ENCODE measurements at regions of chr6 and their contacts with region 1.

Region 1: GRCh38 chr6:31493875-31494694 is 3.9 kb upstream of the MICB start:
- DNase-seq: peak; percentile 85
- H3K4me3 Mint-ChIP-seq: peak overlapping the region; percentile 81
- H3K27ac Mint-ChIP-seq: peak overlapping the region; percentile 78
- H3K4me1 Mint-ChIP-seq: peaks cover 60% of the 10 kb centered on the region
- H3K27me3 Mint-ChIP-seq: no peaks in the 10 kb centered on the region

Region 2: GRCh38 chr6:31462964-31463870 is 30.9 kb before region 1 on chr6:
- CTCF ChIA-PET with region 1: no interaction called
- POLR2A ChIA-PET with region 1: interaction called, 10 read pairs
- DNase-seq: peak; percentile 91
- H3K4me3 Mint-ChIP-seq: peak overlapping the region; percentile 99
- H3K27ac Mint-ChIP-seq: peak overlapping the region; percentile 72
- H3K4me1 Mint-ChIP-seq: peaks cover 56% of the 10 kb centered on the region
- H3K27me3 Mint-ChIP-seq: peaks cover 3% of the 10 kb centered on the region

Region 3: DNA sequence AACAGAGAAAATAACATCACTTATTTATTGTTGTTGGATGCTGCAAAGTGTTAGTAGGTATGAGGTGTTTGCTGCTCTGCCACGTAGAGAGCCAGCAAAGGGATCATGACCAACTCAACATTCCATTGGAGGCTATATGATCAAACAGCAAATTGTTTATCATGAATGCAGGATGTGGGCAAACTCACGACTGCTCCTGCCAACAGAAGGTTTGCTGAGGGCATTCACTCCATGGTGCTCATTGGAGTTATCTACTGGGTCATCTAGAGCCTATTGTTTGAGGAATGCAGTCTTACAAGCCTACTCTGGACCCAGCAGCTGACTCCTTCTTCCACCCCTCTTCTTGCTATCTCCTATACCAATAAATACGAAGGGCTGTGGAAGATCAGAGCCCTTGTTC is 15.9 kb after region 1 on chr6:
- CTCF ChIA-PET with region 1: no interaction called
- POLR2A ChIA-PET with region 1: no interaction called
- DNase-seq: no peak
- H3K4me3 Mint-ChIP-seq: no peak overlapping the region
- H3K27ac Mint-ChIP-seq: no peak overlapping the region
- H3K4me1 Mint-ChIP-seq: peaks cover 3% of the 10 kb centered on the region
- H3K27me3 Mint-ChIP-seq: no peaks in the 10 kb centered on the region

Region 4: DNA sequence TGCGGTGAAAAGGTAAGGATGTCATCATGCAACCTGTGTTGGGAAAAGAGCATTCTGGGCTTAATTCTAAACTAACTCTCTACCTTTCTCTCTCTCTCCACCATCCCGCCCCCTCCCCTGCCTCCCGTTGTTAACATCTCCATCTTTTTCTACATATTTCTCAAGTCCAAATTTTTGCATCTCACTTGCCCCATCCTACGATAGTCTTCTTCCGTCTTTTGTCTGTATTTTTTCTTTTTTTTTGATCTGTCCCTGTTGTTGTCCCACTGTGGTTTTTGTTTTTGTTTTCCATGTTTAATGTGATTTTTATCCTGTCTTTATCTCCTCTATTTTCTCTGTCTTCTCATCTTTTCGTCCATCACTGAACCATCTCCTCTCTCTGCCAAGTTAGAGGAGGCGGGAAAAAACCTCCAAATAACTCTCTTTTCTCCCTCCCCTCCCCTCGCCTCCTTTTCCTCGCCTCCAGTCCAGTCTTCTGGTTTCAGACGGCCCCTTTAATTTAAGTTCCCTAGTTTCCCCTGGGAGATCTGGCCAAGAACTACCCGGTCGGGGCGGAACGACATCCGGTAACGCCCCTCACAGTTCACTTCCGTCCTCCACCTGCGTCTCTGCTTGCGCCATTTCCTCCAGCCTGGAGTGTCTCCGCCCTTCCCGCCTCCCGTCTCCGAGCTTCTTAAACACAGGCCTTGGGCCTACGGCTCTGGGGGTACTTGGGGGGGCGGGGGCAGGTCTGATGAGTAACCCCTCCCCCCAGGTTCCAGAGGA is 53.1 kb after region 1 on chr6 and contains the start of gene NFKBIL1:
- CTCF ChIA-PET with region 1: interaction called, 53 read pairs
- POLR2A ChIA-PET with region 1: interaction called, 164 read pairs
- DNase-seq: peak; percentile 93
- H3K4me3 Mint-ChIP-seq: peak within 1 kb of the TSS; percentile 76
- H3K27ac Mint-ChIP-seq: peak within 1 kb of the TSS; percentile 69
- H3K4me1 Mint-ChIP-seq: peaks cover 62% of the 10 kb centered on the region
- H3K27me3 Mint-ChIP-seq: no peaks in the 10 kb centered on the region
- total RNA-seq, gene NFKBIL1: 22.8 to 23.6 TPM

Region 5: DNA sequence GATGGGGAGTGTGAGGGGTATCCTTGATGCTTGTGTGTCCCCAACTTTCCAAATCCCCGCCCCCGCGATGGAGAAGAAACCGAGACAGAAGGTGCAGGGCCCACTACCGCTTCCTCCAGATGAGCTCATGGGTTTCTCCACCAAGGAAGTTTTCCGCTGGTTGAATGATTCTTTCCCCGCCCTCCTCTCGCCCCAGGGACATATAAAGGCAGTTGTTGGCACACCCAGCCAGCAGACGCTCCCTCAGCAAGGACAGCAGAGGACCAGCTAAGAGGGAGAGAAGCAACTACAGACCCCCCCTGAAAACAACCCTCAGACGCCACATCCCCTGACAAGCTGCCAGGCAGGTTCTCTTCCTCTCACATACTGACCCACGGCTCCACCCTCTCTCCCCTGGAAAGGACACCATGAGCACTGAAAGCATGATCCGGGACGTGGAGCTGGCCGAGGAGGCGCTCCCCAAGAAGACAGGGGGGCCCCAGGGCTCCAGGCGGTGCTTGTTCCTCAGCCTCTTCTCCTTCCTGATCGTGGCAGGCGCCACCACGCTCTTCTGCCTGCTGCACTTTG is 81.3 kb after region 1 on chr6 and contains the start of gene TNF:
- CTCF ChIA-PET with region 1: interaction called, 3 read pairs
- POLR2A ChIA-PET with region 1: interaction called, 51 read pairs
- DNase-seq: peak; percentile 91
- H3K4me3 Mint-ChIP-seq: peak within 1 kb of the TSS; percentile 94
- H3K27ac Mint-ChIP-seq: peak within 1 kb of the TSS; percentile 96
- H3K4me1 Mint-ChIP-seq: peaks cover 73% of the 10 kb centered on the region
- H3K27me3 Mint-ChIP-seq: peaks cover 2% of the 10 kb centered on the region
- total RNA-seq, gene TNF: 124 to 130 TPM

Region 6: GRCh38 chr6:31586599-31587281 is 92.7 kb after region 1 on chr6:
- CTCF ChIA-PET with region 1: interaction called, 4 read pairs
- POLR2A ChIA-PET with region 1: interaction called, 14 read pairs
- DNase-seq: peak; percentile 42
- H3K4me3 Mint-ChIP-seq: peak overlapping the region; percentile 74
- H3K27ac Mint-ChIP-seq: peak overlapping the region; percentile 98
- H3K4me1 Mint-ChIP-seq: peaks cover 80% of the 10 kb centered on the region
- H3K27me3 Mint-ChIP-seq: no peaks in the 10 kb centered on the region

Region 7: DNA sequence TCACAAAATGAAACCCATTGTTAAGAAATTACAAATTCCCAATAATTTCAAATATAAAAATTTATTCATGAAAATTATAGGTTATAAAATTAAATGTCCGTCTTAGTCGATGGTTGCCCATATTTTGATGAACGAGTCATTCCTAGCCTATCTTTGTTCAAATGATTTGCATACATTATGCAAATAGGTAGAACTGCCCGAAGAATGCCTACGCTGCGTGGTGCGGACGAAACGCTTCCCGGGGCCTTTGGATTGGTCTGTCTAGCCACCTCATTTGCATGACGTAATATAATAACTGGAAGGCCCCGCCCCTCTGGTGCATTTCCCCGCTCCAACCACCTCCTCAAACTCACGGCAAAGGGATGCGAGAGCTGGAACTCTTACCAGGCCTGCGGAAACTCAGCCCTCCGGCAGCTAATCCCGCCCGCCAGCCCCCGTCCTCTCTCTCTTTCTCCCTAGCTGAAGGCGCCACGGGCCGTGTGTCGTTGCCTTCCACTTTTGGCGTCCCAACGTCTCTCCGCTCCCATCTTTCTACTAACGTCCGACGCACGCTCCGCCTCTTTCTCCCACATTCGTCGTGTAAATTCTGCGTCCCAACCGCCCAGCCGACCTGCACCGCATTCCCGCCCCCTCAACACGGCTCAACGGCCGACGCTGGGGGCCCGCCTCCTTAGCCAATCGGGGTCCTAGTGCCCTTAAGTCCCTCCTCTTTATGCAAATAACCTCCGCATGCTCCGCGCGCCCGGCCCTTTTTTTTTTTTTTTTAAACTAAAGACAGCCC is 125.9 kb after region 1 on chr6:
- CTCF ChIA-PET with region 1: no interaction called
- POLR2A ChIA-PET with region 1: interaction called, 14 read pairs
- DNase-seq: peak; percentile 98
- H3K4me3 Mint-ChIP-seq: peak overlapping the region; percentile 81
- H3K27ac Mint-ChIP-seq: peak overlapping the region; percentile 95
- H3K4me1 Mint-ChIP-seq: peaks cover 50% of the 10 kb centered on the region
- H3K27me3 Mint-ChIP-seq: no peaks in the 10 kb centered on the region